Sciatic nerve (tissue), 2 donors: ENCODE measurements at regions of chr9 and their contacts with region 1.

Region 1: DNA sequence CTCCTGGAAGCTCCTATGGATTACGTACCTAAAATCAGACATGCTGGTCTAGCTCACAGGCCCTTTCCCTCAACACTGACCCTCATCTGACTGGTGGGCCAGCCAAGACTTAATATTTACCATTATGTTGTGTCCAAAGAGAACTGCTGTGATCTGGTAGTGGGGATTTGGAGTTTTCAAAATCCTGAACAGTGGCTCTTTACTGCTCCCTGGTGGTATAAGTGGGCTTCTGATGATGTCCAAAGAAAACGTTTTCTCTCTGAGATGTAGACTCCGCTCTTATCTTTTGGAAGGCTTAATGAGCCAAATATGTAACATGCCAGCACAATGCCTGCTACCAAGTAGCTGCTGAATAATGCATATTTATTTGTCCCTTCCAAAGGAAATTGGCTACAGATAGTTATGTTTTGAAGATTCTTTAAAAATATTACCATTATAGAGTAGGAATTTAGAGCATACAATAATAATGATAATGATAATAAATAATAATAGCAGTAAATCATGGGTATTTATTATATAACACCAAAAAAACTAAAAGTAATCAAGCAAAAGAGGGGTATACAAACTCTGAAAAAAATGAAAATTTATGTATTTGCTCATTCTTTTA is 406.6 kb upstream of the TNC start:
- DNase-seq: no peak
- ATAC-seq: peak; percentile 84

Region 2: GRCh38 chr9:114662081-114662989 is 862.2 kb before region 1 on chr9:
- intact Hi-C with region 1: loop called (anchors 10 kb)
- DNase-seq: peak; percentile 63
- ATAC-seq: peak; percentile 73

Region 3: DNA sequence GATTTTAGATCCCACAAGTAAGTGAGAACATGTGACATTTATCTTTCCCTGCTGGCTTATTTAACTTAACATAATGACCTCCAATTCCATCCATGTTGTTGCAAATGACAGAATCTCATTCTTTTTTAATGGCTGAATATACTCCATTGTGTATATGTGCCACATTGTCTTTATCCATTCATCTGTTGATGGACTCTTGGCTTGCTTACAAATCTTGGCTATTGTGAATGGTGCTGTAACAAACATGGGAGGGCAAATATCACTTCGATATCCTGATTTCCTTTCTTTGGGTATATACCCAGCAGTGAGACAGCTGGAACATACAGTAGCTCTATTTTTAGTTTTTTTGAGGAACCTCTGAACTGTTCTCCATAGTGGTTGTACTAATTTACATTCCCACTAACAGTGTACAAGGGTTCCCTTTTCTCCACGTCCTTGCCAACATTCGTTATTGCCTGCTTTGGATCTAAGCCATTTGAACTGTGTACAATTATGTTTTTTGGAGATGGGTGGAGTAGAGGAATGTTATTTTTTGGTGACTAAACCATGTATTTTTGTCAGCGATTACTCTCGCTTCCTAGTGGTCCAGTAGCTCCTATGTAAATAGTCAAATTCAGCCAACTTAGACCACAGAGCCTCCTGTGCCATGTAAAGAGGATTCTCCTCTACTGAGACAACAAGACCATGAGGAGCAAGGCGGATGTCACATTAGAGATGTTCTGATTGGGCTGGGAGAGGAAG is 779.3 kb before region 1 on chr9:
- intact Hi-C with region 1: loop called (anchors 10 kb)
- DNase-seq: no peak
- ATAC-seq: peak; percentile 35

Region 4: GRCh38 chr9:115615821-115616665 is 91.5 kb after region 1 on chr9:
- intact Hi-C with region 1: no loop called
- DNase-seq: no peak
- ATAC-seq: no peak